Uterus (tissue), 4 donors: ENCODE measurements at regions of chr17 and their contacts with region 1.

Region 1: GRCh38 chr17:76397687-76398487 is 13.5 kb downstream of the SPHK1 start:
- DNase-seq: peak; percentile 86 to 87
- H3K4me3 ChIP-seq: no peak overlapping the region
- H3K27ac ChIP-seq: no peak overlapping the region
- H3K4me1 ChIP-seq: no peaks in the 10 kb centered on the region
- H3K27me3 ChIP-seq: no peaks in the 10 kb centered on the region
- CTCF ChIP-seq: peak; percentile 95 to 97 (median 96)
- POLR2A ChIP-seq: no peak

Region 2: GRCh38 chr17:76304226-76305134 is 93.4 kb before region 1 on chr17:
- intact Hi-C with region 1: loop called (anchors 5 kb)
- DNase-seq: no peak
- H3K4me3 ChIP-seq: no peak overlapping the region
- H3K27ac ChIP-seq: no peak overlapping the region
- H3K4me1 ChIP-seq: no peaks in the 10 kb centered on the region
- H3K27me3 ChIP-seq: no peaks in the 10 kb centered on the region
- CTCF ChIP-seq: no peak
- POLR2A ChIP-seq: no peak